T-cell (primary cell): ENCODE measurements at regions of chr2 and their contacts with region 1.

Region 1: GRCh38 chr2:70070541-70071268 is 16.6 kb upstream of the PCBP1 start:
- DNase-seq: peak in 34 of 35 experiments; percentile 24 to 87 (median 48)
- ATAC-seq: peak; percentile 49 to 80 (median 78)
- H3K4me3 ChIP-seq: peak overlapping the region; percentile 23 to 26
- H3K4me3 Mint-ChIP-seq: peak overlapping the region; percentile 56 to 72 (median 71)
- H3K27ac ChIP-seq: peak overlapping the region; percentile 95
- H3K27ac Mint-ChIP-seq: peak overlapping the region; percentile 95 to 97
- H3K4me1 ChIP-seq: peaks cover 24 to 45% of the 10 kb centered on the region in 2 experiments
- H3K4me1 Mint-ChIP-seq: peaks cover 44 to 61% (median 59%) of the 10 kb centered on the region in 3 donors
- H3K27me3 ChIP-seq: no peaks in the 10 kb centered on the region
- H3K27me3 Mint-ChIP-seq: no peaks in the 10 kb centered on the region

Region 2: DNA sequence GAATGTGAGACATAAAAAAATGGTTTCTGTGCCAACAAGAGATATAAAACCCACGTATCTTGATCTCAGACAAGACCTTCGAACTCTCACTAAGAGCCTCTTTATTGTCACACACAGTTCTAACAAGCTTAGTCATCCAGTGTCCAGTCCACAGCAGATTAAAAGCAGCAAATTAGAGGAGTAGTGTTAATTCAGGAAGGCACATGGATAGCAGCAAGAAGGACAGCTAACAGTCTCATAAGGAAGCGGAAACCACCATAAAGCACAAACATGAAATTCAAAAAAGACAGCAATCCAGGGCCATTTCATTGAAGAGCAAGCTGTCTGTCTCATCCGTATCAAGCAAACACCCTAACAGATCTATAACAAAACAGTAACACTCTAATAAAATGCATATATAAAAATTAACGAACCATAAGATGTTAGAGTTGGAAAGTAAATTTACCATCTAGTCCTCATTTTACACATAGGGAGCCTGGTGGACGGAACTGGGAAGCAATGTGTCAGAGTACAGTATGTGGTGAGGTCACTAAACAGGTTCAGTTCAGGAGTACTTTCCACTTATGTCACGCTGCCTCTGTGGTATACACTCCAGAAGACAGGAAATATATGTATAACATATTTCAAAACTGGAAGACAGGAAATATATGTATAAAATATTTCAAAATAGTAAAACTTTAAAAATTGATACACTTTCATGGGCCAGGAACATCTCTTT is 445.5 kb before region 1 on chr2:
- CTCF ChIA-PET with region 1: no interaction called
- POLR2A ChIA-PET with region 1: interaction called in 1 of 2 experiments, 18 read pairs
- DNase-seq: no peak
- ATAC-seq: peak in 2 of 4 experiments; percentile 27 to 35
- H3K4me3 ChIP-seq: no peak overlapping the region
- H3K4me3 Mint-ChIP-seq: no peak overlapping the region
- H3K27ac ChIP-seq: peak overlapping the region; percentile 5
- H3K27ac Mint-ChIP-seq: no peak overlapping the region
- H3K4me1 ChIP-seq: peaks cover 52 to 61% of the 10 kb centered on the region in 2 experiments
- H3K4me1 Mint-ChIP-seq: peaks cover 0 to 20% (median under 1%) of the 10 kb centered on the region in 3 donors
- H3K27me3 ChIP-seq: no peaks in the 10 kb centered on the region
- H3K27me3 Mint-ChIP-seq: no peaks in the 10 kb centered on the region

Region 3: GRCh38 chr2:69863298-69863697 is 207.4 kb before region 1 on chr2:
- CTCF ChIA-PET with region 1: no interaction called
- POLR2A ChIA-PET with region 1: interaction called in 1 of 2 experiments, 15 read pairs
- DNase-seq: no peak
- ATAC-seq: no peak
- H3K4me3 ChIP-seq: no peak overlapping the region
- H3K4me3 Mint-ChIP-seq: no peak overlapping the region
- H3K27ac ChIP-seq: no peak overlapping the region
- H3K27ac Mint-ChIP-seq: no peak overlapping the region
- H3K4me1 ChIP-seq: no peaks in the 10 kb centered on the region
- H3K4me1 Mint-ChIP-seq: no peaks in the 10 kb centered on the region
- H3K27me3 ChIP-seq: no peaks in the 10 kb centered on the region
- H3K27me3 Mint-ChIP-seq: no peaks in the 10 kb centered on the region

Region 4: GRCh38 chr2:69914170-69914960 is 156.3 kb before region 1 on chr2:
- CTCF ChIA-PET with region 1: interaction called, 3 to 34 read pairs
- POLR2A ChIA-PET with region 1: interaction called, 12 to 14 read pairs
- DNase-seq: peak in 28 of 35 experiments; percentile 12 to 100 (median 100)
- ATAC-seq: peak; percentile 90 to 95 (median 92)
- H3K4me3 ChIP-seq: peak overlapping the region; percentile 92 to 94
- H3K4me3 Mint-ChIP-seq: peak overlapping the region; percentile 80 to 86 (median 81)
- H3K27ac ChIP-seq: peak overlapping the region; percentile 98
- H3K27ac Mint-ChIP-seq: peak overlapping the region; percentile 78
- H3K4me1 ChIP-seq: peaks cover 12 to 15% of the 10 kb centered on the region in 2 experiments
- H3K4me1 Mint-ChIP-seq: peaks cover 30 to 36% (median 36%) of the 10 kb centered on the region in 3 donors
- H3K27me3 ChIP-seq: no peaks in the 10 kb centered on the region
- H3K27me3 Mint-ChIP-seq: no peaks in the 10 kb centered on the region

Region 5: GRCh38 chr2:70086278-70086837 is 15.7 kb after region 1 on chr2:
- CTCF ChIA-PET with region 1: interaction called, 5 to 51 read pairs
- POLR2A ChIA-PET with region 1: interaction called, 3 to 8 read pairs
- DNase-seq: peak in 32 of 35 experiments; percentile 58 to 90 (median 74)
- ATAC-seq: peak; percentile 46 to 68 (median 50)
- H3K4me3 ChIP-seq: peak overlapping the region; percentile 52 to 97
- H3K4me3 Mint-ChIP-seq: peak overlapping the region; percentile 95 to 97 (median 95)
- H3K27ac ChIP-seq: peak overlapping the region; percentile 100
- H3K27ac Mint-ChIP-seq: peak overlapping the region; percentile 100
- H3K4me1 ChIP-seq: peaks cover 45 to 66% of the 10 kb centered on the region in 2 experiments
- H3K4me1 Mint-ChIP-seq: peaks cover 50 to 69% (median 61%) of the 10 kb centered on the region in 3 donors
- H3K27me3 ChIP-seq: no peaks in the 10 kb centered on the region
- H3K27me3 Mint-ChIP-seq: no peaks in the 10 kb centered on the region

Region 6: DNA sequence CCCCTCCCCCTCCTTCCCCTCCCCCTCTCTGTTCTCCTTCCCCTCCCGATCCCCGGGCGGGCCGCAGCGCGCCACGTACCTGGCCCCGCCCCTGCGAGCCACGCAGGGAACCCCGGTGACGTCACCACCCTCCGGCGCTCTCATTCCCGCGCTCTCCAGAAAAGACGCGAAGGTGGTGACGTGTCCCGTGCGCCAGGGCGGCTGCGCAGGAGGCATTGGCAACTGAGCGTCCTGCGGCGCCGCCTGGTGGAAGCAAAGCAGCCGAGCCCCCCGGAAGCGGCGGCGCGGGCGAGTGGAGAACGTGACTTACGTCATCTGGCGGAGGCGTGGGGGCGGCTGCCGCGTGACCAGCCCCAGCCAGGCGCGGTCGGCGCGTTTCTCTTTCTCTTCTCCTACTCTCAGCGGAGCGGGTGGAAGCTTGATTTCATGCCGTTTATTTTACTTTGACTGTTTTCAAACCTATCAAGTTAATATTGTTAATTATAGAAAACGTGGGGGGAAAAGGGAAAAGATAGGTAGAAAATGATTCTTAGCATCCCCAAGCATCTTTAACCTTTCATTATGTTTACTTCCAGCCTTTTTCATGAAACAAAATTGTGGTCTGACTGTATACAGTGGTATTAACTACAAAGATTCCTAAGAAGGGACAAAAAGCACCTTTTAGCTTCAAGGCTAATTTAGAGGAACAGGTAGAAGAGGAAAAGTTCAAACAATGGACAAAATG is 72.0 kb after region 1 on chr2:
- CTCF ChIA-PET with region 1: interaction called, 3 to 18 read pairs
- POLR2A ChIA-PET with region 1: no interaction called
- DNase-seq: peak; percentile 98 to 100 (median 99)
- ATAC-seq: peak; percentile 79 to 83 (median 82)
- H3K4me3 ChIP-seq: peak overlapping the region; percentile 3 to 54
- H3K4me3 Mint-ChIP-seq: peak overlapping the region; percentile 82 to 88 (median 87)
- H3K27ac ChIP-seq: peak overlapping the region; percentile 97
- H3K27ac Mint-ChIP-seq: peak overlapping the region; percentile 97
- H3K4me1 ChIP-seq: peaks cover 31 to 52% of the 10 kb centered on the region in 2 experiments
- H3K4me1 Mint-ChIP-seq: peaks cover 55 to 73% (median 59%) of the 10 kb centered on the region in 3 donors
- H3K27me3 ChIP-seq: no peaks in the 10 kb centered on the region
- H3K27me3 Mint-ChIP-seq: no peaks in the 10 kb centered on the region

Region 7: GRCh38 chr2:71331581-71332434 is 1261.1 kb after region 1 on chr2 and contains the start of gene ZNF638:
- CTCF ChIA-PET with region 1: no interaction called
- POLR2A ChIA-PET with region 1: interaction called in 1 of 2 experiments, 11 read pairs
- DNase-seq: peak; percentile 79 to 98 (median 91)
- ATAC-seq: peak; percentile 95 to 98 (median 98)
- H3K4me3 ChIP-seq: peak within 1 kb of the TSS; percentile 81 to 85
- H3K4me3 Mint-ChIP-seq: peak within 1 kb of the TSS; percentile 99 to 100 (median 100)
- H3K27ac ChIP-seq: peak within 1 kb of the TSS; percentile 89
- H3K27ac Mint-ChIP-seq: peak within 1 kb of the TSS; percentile 99 to 100
- H3K4me1 ChIP-seq: peaks cover 13 to 17% of the 10 kb centered on the region in 2 experiments
- H3K4me1 Mint-ChIP-seq: peaks cover 39 to 52% (median 50%) of the 10 kb centered on the region in 3 donors
- H3K27me3 ChIP-seq: no peaks in the 10 kb centered on the region
- H3K27me3 Mint-ChIP-seq: peaks cover 0 to 1% of the 10 kb centered on the region in 2 donors
- total RNA-seq, gene ZNF638: 112 to 144 (median 131) TPM